ENCODE measurements at regions of chr7 and their contacts with region 1.

Region 1: DNA sequence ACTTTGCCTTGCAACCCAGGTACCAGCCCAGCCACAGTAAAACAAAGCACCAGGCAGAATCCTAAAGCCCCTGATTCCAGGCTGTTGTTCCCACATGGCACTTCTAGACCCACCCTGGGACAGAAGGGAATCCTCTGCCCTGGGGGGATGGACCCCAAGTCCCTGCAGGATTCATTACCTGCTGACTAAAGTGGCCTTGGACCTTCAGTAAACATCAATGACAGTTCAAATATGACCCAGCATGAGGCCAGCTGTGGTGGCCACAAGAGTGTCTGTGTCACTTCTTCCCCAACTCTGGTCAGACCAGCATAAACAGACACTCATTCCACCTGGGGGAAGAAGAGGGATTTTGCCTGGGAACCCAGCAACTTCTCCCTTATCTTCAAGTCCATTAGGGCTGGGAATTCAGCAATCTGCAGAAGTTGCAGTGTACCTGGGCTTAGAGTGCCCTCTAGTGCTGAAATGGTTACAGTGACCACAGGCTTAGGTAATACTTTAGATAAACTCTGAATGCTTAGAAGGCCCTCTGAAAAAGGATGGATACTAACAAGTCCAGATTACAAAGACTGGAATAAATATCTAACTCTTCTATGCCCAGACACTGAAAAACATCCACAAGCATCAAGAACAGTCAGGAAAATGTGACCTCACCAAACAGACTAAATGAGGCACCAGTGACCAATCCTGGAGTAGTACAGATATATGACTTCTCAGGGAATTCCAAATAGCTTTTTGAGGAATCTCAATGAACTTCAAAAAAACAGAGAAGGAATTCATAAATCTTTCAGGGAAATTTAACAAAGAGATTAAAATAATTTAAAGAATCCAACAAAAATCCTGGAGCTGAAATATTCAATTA is 108.5 kb upstream of the TMEM168 start:
- DNase-seq: peak; percentile 78
- ATAC-seq: peak; percentile 91
- H3K4me3 ChIP-seq: no peak overlapping the region
- H3K27ac ChIP-seq: no peak overlapping the region
- H3K4me1 ChIP-seq: no peaks in the 10 kb centered on the region
- H3K27me3 ChIP-seq: no peaks in the 10 kb centered on the region
- CTCF ChIP-seq: peak; percentile 85

Region 2: GRCh38 chr7:112665726-112666125 is 232.9 kb before region 1 on chr7:
- CTCF ChIA-PET with region 1: no interaction called
- POLR2A ChIA-PET with region 1: no interaction called
- intact Hi-C with region 1: loop called (anchors 10 kb)
- DNase-seq: no peak
- ATAC-seq: peak; percentile 50; the same call in 1 of the 2 replicates
- H3K4me3 ChIP-seq: no peak overlapping the region
- H3K27ac ChIP-seq: no peak overlapping the region
- H3K4me1 ChIP-seq: no peaks in the 10 kb centered on the region
- H3K27me3 ChIP-seq: 0 out of 2 replicates have a peak, but pooled peaks cover 7% of the 10 kb centered on the region
- CTCF ChIP-seq: no peak

Region 3: DNA sequence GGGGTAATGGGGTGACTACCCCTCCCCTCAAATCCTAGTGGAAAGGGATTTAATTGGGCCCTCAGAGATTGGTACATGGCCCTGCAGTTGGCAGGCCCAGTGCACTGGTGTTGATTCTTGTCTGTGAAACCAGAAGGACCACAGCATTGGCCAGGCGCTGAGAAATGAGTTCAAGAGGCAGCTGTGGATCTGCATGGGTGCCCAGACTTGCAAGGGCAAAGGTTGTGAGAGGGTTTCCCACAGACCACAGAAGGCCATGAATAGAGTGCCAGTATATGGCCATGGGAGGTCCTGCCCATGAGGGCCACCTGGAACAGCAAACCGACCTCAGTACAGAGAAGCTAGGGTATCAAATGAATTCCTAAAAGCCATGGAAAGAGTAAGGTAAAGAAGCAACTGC is 141.3 kb before region 1 on chr7:
- CTCF ChIA-PET with region 1: no interaction called
- POLR2A ChIA-PET with region 1: no interaction called
- intact Hi-C with region 1: loop called (anchors 10 kb)
- DNase-seq: no peak
- ATAC-seq: no peak
- H3K4me3 ChIP-seq: no peak overlapping the region
- H3K27ac ChIP-seq: no peak overlapping the region
- H3K4me1 ChIP-seq: no peaks in the 10 kb centered on the region
- H3K27me3 ChIP-seq: no peaks in the 10 kb centered on the region
- CTCF ChIP-seq: no peak

Region 4: GRCh38 chr7:112843151-112843550 is 55.5 kb before region 1 on chr7:
- CTCF ChIA-PET with region 1: no interaction called
- POLR2A ChIA-PET with region 1: no interaction called
- intact Hi-C with region 1: no loop called
- DNase-seq: no peak
- ATAC-seq: no peak
- H3K4me3 ChIP-seq: no peak overlapping the region
- H3K27ac ChIP-seq: no peak overlapping the region
- H3K4me1 ChIP-seq: no peaks in the 10 kb centered on the region
- H3K27me3 ChIP-seq: no peaks in the 10 kb centered on the region
- CTCF ChIP-seq: no peak